PC-3 (cell line): ENCODE measurements at regions of chr17 and their contacts with region 1.

Region 1: DNA sequence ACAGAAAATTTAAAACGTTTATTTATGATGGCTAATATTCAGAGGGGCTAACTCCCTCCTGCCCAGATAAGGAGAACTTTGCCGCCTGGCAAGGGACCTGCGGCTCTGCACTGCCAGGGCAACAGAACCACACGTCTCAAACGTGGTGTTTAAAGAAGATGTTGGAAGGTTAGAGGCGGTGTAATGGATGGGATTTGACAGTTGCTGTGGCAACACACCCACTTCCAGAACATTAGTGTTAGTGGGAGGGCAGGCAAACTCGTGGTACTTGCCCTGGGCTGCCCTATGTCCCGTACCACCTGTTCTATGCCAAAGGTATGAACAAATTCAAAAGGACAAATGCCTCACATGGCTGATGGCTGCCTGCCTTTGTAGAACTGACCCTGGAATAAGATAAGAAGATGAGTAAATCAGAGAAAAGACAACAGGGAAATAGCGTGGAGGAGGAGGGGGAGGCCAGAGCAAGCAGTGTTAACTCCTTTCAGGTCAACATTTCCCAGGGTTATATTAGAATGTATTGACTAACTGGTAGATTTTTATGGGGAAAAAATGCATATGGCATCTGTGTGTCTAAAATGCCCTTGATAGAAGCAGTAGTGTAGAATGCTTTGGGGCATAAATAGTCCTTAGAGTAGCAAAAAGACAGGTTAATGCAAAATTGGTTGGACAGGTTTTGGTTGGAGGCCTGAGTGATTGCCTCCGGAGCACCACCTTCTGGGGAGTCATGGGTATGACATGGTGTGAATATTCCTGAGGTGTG is 30.8 kb downstream of the HLF start:
- DNase-seq: peak; percentile 79
- ATAC-seq: peak; percentile 93
- H3K4me3 ChIP-seq: no peak overlapping the region
- H3K27ac ChIP-seq: no peak overlapping the region
- H3K4me1 ChIP-seq: no peaks in the 10 kb centered on the region
- H3K27me3 ChIP-seq: no peaks in the 10 kb centered on the region
- CTCF ChIP-seq: peak; percentile 94

Region 2: GRCh38 chr17:54992797-54993639 is 302.6 kb before region 1 on chr17:
- CTCF ChIA-PET with region 1: interaction called, 7 read pairs
- POLR2A ChIA-PET with region 1: no interaction called
- intact Hi-C with region 1: loop called (anchors 1 kb)
- DNase-seq: peak; percentile 82
- ATAC-seq: peak; percentile 88
- H3K4me3 ChIP-seq: no peak overlapping the region
- H3K27ac ChIP-seq: no peak overlapping the region
- H3K4me1 ChIP-seq: no peaks in the 10 kb centered on the region
- H3K27me3 ChIP-seq: no peaks in the 10 kb centered on the region
- CTCF ChIP-seq: peak; percentile 81

Region 3: GRCh38 chr17:55053855-55054254 is 241.7 kb before region 1 on chr17:
- CTCF ChIA-PET with region 1: interaction called, 4 read pairs
- POLR2A ChIA-PET with region 1: no interaction called
- intact Hi-C with region 1: loop called (anchors 1 kb)
- DNase-seq: peak; percentile 39
- ATAC-seq: no peak
- H3K4me3 ChIP-seq: no peak overlapping the region
- H3K27ac ChIP-seq: no peak overlapping the region
- H3K4me1 ChIP-seq: peaks cover 16% of the 10 kb centered on the region
- H3K27me3 ChIP-seq: no peaks in the 10 kb centered on the region
- CTCF ChIP-seq: peak; percentile 75

Region 4: DNA sequence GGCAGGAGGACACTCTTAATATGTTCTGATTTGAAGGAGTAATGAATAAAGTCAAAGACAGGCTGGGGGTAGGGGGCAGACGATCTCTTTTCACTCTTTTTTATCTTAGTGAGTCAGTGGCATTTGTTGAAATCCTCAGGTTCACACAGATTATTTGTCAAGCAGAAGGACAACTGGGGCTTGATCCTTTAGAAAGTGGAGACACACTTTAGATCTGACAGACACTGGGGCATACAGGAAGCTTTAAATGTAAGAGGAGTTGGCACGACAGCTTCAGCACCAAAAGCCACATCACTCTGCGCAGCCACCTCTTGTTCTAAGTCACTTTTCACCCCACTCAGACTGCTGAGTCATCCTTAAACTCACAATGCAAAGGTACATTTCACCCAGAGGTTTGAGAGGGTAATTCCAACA is 205.5 kb before region 1 on chr17:
- CTCF ChIA-PET with region 1: no interaction called
- POLR2A ChIA-PET with region 1: no interaction called
- intact Hi-C with region 1: loop called (anchors 1 kb)
- DNase-seq: peak; percentile 82
- ATAC-seq: peak; percentile 86
- H3K4me3 ChIP-seq: no peak overlapping the region
- H3K27ac ChIP-seq: peak overlapping the region; percentile 65
- H3K4me1 ChIP-seq: peaks cover 29% of the 10 kb centered on the region
- H3K27me3 ChIP-seq: no peaks in the 10 kb centered on the region
- CTCF ChIP-seq: no peak

Region 5: GRCh38 chr17:55161935-55162555 is 133.5 kb before region 1 on chr17:
- CTCF ChIA-PET with region 1: no interaction called
- POLR2A ChIA-PET with region 1: no interaction called
- intact Hi-C with region 1: loop called (anchors 5 kb)
- DNase-seq: peak; percentile 99
- ATAC-seq: peak; percentile 85
- H3K4me3 ChIP-seq: no peak overlapping the region
- H3K27ac ChIP-seq: peak overlapping the region; percentile 79
- H3K4me1 ChIP-seq: peaks cover 56% of the 10 kb centered on the region
- H3K27me3 ChIP-seq: no peaks in the 10 kb centered on the region
- CTCF ChIP-seq: no peak

Region 6: DNA sequence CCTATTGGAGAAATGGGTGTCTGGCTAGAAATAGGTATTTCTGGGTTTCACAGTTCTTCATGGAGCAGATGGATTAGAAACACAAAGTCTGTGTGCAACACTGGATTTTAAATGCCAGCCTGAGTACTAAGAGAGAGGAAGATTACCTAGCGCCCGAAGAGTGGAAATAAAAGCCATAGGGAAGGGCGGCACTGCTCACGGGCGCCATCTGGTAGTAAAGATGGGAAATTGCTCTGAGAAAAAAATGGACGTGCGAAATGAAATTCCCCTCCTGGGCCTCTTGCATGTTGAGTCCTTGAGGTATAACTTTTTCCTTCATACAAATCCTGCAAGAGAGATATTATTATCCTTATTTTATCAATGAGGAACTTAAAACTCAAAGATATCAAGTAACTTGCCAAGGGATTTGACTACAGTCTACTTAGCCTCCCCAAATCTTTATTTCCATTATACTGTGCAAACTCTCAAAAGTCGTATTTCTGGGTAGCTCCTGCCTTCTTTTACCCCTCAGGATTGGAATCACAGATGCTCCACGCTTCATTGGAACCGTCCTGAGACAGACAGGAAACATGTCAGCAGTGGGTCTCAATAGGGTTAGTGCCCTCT is 53.3 kb after region 1 on chr17:
- CTCF ChIA-PET with region 1: interaction called, 14 read pairs
- POLR2A ChIA-PET with region 1: no interaction called
- intact Hi-C with region 1: loop called (anchors 5 kb)
- DNase-seq: peak; percentile 72
- ATAC-seq: peak; percentile 83
- H3K4me3 ChIP-seq: no peak overlapping the region
- H3K27ac ChIP-seq: no peak overlapping the region
- H3K4me1 ChIP-seq: no peaks in the 10 kb centered on the region
- H3K27me3 ChIP-seq: no peaks in the 10 kb centered on the region
- CTCF ChIP-seq: peak; percentile 96